Right ventricle myocardium inferior (tissue), 1 donor: ENCODE measurements at regions of chr3 and their contacts with region 1.

Region 1: GRCh38 chr3:125141596-125142419 is 70.7 kb downstream of the SLC12A8 start:
- DNase-seq: peak; percentile 88
- ATAC-seq: peak; percentile 74

Region 2: GRCh38 chr3:125011941-125012340 is 129.9 kb before region 1 on chr3:
- intact Hi-C with region 1: no loop called
- DNase-seq: no peak
- ATAC-seq: no peak

Region 3: GRCh38 chr3:125042725-125043406 is 98.9 kb before region 1 on chr3:
- intact Hi-C with region 1: loop called (anchors 5 kb)
- DNase-seq: peak; percentile 74
- ATAC-seq: peak; percentile 75

Region 4: DNA sequence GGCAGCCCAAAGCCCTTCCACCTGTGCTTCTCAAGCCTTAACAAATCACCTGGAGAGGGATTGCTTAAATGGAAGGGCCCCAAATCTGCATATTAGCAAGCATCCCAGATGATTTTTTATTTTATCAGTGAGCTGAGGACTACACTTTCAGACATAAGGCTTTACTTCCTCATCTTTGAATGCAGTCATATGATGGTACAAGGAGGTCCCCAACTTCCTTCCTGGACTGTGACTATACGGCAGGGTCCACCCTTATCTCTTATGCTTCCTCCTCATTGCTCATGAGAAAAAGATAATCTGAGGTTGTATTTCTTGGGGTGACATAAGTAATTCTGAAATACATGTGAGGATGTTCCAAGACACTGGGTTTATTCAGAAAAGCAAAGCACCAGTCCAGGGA is 72.4 kb before region 1 on chr3:
- intact Hi-C with region 1: no loop called
- DNase-seq: no peak
- ATAC-seq: no peak